Gastrocnemius medialis (tissue), 4 donors: ENCODE measurements at regions of chr19 and their contacts with region 1.

Region 1: GRCh38 chr19:37466798-37467607 is at the start of gene ZNF569:
- DNase-seq: peak; percentile 86 to 89
- ATAC-seq: peak; percentile 91 to 92
- H3K4me3 ChIP-seq: peak within 1 kb of the TSS; percentile 87 to 90 (median 88)
- H3K27ac ChIP-seq: peak within 1 kb of the TSS; percentile 84 to 92 (median 88)
- H3K4me1 ChIP-seq: peaks cover 14 to 16% of the 10 kb centered on the region in 2 donors
- H3K27me3 ChIP-seq: no peaks in the 10 kb centered on the region
- CTCF ChIP-seq: peak in 1 of 5 experiments; percentile 16
- POLR2A ChIP-seq: peak; percentile 20 to 28
- total RNA-seq, gene ZNF569: 3.4 to 9.2 (median 4.4) TPM

Region 2: DNA sequence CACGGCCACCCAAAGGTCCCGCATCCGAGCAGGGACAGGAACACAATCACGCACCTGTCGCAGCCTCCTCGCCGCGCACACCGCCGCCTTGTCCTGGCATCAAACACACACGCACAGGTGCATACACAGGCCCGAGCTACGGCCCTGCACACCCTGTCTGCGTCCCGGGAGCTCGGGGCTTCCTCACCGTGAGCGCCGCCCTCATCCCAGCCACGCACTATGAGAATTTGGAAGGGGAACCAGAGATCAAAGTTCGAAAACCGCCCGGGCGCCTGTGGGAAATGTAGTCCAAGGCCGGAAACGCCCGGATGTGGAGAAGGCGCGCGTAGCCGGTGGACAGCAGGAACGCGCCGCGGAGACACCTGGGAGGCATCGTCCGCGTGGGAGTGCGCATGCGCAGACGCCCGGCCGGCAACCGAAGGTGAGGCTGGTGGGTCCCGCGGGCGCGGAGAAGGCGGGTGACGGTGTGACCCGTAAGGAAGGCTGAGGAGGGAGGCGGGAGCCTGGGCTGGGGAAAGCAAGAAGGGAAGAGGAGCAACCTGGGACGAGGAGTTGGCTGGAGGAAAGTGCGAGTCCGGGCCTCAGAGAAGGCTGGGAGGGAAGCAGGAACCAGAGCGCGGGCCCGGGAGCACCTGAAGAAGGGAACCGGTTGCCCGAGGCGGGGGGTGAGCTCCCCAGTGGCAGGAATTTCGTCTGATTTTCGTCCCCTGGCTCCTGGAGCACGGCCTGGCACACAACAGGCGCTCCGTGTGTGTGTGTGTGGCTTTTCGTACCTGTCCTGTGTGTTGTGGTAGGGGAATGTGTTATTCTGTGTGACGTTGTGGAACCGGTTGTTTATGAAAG is 779.6 kb before region 1 on chr19 and contains the start of gene ZNF567:
- in situ Hi-C with region 1: no loop called
- intact Hi-C with region 1: loop called (anchors 5 kb)
- DNase-seq: peak; percentile 93 to 96
- ATAC-seq: peak; percentile 99
- H3K4me3 ChIP-seq: peak within 1 kb of the TSS; percentile 76 to 96 (median 90)
- H3K27ac ChIP-seq: peak within 1 kb of the TSS; percentile 77 to 87 (median 81)
- H3K4me1 ChIP-seq: peaks cover 13 to 16% of the 10 kb centered on the region in 2 donors
- H3K27me3 ChIP-seq: no peaks in the 10 kb centered on the region
- CTCF ChIP-seq: no peak
- POLR2A ChIP-seq: peak; percentile 68 to 74
- total RNA-seq, gene ZNF567: 1.1 to 3.5 (median 1.9) TPM

Region 3: DNA sequence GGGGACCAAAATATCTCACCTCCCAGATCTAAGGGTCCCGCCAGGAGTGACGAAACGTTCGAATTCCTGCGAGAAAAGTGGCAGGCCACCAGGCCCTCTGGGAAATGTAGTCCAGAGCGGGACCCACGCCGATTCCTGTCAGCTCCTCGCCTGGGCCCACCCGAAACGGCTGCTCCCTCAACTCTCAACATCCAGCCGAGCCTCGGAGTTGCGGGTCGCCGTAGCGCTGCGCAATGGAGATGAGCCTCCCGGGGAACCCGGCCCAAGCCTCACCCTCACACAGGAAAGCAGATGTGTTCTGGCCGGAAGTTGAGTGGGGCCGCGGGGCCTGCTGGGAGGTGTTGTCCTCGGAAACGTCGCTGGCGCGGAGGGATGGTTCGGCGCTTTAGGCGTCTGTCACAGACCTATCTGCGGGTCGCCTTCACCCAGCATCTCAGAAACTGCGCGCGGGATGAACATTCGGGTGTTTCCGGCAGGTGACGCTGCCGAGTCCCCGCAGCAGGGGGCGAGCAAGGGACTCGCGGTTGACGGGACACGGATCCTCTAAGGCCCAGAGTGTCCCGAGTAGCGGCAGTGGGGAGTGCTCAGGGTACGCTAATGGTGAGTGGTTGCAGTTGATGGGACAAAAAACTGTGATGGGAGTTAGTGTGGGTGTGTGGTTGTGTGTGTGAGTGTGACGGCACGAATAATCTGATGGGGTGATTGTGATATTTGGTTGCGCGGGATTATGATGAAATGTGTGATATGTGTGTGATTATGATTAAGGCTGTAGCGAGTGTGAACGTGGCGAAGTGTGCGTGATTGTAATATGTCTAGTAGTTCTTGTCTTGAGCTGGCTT is 550.8 kb before region 1 on chr19 and contains the starts of genes ZNF568 and ZNF829:
- in situ Hi-C with region 1: no loop called
- intact Hi-C with region 1: loop called (anchors 1 kb)
- DNase-seq: peak; percentile 76 to 79
- ATAC-seq: peak; percentile 98
- H3K4me3 ChIP-seq: peak within 1 kb of the TSS; percentile 82 to 98 (median 83)
- H3K27ac ChIP-seq: peak within 1 kb of the TSS; percentile 92 to 97 (median 94)
- H3K4me1 ChIP-seq: peaks cover 8 to 12% of the 10 kb centered on the region in 2 donors
- H3K27me3 ChIP-seq: no peaks in the 10 kb centered on the region
- CTCF ChIP-seq: peak; percentile 32 to 64 (median 46)
- POLR2A ChIP-seq: peak in 1 of 2 donors; percentile 12
- total RNA-seq, gene ZNF568: 3.0 to 10.2 (median 5.4) TPM
- total RNA-seq, gene ZNF829: 0.97 to 1.5 (median 1.2) TPM

Region 4: DNA sequence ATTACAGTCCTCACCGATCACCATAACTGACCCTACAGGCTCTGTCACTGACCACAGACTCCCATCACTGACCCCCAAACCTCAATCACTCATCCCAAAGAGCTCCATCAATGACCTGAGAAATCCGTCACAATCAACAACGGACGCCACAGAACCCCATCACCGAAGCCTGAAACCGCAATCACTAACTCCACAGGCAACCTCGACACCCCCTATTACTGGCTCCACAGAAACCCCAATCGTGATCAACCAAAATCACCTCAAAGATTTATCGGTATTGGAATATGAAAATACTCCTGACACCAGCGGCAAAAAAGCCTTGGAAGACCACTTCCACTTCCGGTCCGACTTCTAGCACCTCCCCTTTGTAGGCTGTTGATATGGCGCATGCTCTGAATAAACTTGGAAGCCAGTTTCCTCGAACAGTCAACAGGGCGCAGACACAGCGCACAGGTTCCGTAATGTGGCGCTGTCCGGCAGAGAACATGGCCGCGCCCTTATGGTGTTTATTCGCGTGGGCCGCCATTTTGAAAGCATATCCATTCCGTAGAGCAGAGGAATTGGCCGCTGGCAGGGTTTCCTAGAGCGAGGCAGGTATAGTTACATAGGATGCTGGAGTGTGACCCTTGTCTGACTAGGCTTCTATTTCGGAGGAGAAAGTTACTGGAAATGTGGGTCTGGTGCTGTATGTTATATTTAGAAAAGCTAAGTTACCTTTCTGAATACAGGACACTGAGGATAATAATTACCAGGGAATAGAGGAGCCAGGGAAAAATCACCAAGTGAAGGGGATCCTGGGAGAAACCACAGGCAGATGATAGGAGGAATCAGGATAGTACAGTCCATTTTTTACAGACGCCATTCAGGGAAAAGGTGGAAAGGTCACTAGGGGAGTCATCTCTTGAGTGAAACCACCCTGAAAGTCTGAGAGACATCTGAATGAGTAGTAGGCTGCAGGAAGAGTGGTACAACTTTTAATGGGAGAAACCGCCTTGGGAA is 294.3 kb before region 1 on chr19 and contains the start of gene ZNF585A:
- in situ Hi-C with region 1: no loop called
- intact Hi-C with region 1: loop called (anchors 1 kb)
- DNase-seq: peak; percentile 90 to 93
- ATAC-seq: peak; percentile 100
- H3K4me3 ChIP-seq: peak within 1 kb of the TSS; percentile 74 to 85 (median 80)
- H3K27ac ChIP-seq: peak within 1 kb of the TSS; percentile 80 to 90 (median 84)
- H3K4me1 ChIP-seq: peaks cover 7 to 12% of the 10 kb centered on the region in 2 donors
- H3K27me3 ChIP-seq: no peaks in the 10 kb centered on the region
- CTCF ChIP-seq: peak in 2 of 5 experiments; percentile 21 to 32
- POLR2A ChIP-seq: peak in 1 of 2 donors; percentile 14
- total RNA-seq, gene ZNF585A: 2.0 to 10.5 (median 6.0) TPM

Region 5: GRCh38 chr19:37334179-37335071 is 132.6 kb before region 1 on chr19:
- in situ Hi-C with region 1: loop called in 1 of 4 experiments (anchors 25 kb)
- intact Hi-C with region 1: loop called (anchors 2 kb)
- DNase-seq: peak; percentile 87 to 91
- ATAC-seq: peak; percentile 99 to 100
- H3K4me3 ChIP-seq: peak overlapping the region; percentile 66 to 93 (median 82)
- H3K27ac ChIP-seq: peak overlapping the region; percentile 83 to 91 (median 88)
- H3K4me1 ChIP-seq: peaks cover 16 to 25% of the 10 kb centered on the region in 2 donors
- H3K27me3 ChIP-seq: no peaks in the 10 kb centered on the region
- CTCF ChIP-seq: no peak
- POLR2A ChIP-seq: peak; percentile 29 to 61

Region 6: DNA sequence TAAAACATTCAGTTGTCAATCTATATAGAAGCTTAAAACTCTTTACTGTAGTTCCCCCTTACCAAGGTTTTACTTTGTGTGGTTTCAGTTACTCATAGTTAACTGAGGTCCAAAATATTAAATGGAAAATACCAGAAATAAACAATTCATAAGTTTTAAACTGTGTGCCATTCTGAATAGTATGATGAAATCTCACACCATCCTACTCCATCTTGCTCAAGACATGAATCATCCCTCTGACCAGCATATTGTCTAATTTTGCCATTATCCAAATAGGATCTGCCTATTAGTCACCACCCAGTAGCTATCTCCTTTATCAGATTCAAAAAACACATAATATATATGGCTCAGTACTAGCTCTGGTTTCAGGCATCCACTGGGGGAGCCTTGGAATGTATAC is 105.2 kb after region 1 on chr19:
- in situ Hi-C with region 1: no loop called
- intact Hi-C with region 1: no loop called
- DNase-seq: no peak
- ATAC-seq: no peak
- H3K4me3 ChIP-seq: no peak overlapping the region
- H3K27ac ChIP-seq: no peak overlapping the region
- H3K4me1 ChIP-seq: no peaks in the 10 kb centered on the region
- H3K27me3 ChIP-seq: no peaks in the 10 kb centered on the region
- CTCF ChIP-seq: no peak
- POLR2A ChIP-seq: no peak

Region 7: DNA sequence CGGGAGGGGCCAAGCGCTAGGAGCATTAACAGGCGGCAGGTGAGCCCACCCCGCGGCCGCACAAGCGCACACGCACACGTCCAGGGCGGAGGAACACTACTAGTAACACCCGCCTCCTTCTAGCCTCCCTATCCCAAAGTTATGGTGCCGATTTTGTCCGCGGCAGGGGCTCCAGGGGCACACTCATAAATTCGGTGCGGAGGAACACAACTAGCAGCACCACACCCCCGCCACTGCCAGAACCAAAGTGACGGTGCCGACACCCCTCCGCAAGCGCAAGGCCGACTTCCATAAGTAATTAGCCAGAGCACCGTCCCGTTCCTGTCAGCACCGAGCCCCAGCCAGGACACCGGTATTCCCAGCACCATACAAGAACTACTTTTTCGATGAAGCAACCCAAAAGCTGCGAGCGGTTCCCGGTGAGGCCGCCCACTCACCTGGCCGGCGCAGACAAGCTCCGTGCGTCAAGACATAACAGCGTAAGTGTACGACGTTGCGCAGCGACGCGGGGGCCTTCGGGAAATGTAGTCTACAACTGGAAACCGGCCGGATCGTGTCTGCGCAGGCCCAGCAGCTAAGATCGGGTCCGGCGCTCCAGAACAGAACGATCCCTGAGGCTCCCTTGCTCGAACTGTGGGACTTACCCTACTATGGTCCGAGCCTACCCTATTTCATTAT is 127.4 kb after region 1 on chr19 and contains the starts of genes ZNF540 and ZNF571:
- in situ Hi-C with region 1: no loop called
- intact Hi-C with region 1: loop called (anchors 1 kb)
- DNase-seq: peak; percentile 85 to 89
- ATAC-seq: peak; percentile 98 to 99
- H3K4me3 ChIP-seq: peak within 1 kb of the TSS; percentile 78 to 95 (median 86)
- H3K27ac ChIP-seq: peak within 1 kb of the TSS; percentile 87 to 95 (median 90)
- H3K4me1 ChIP-seq: peaks cover 17 to 19% of the 10 kb centered on the region in 2 donors
- H3K27me3 ChIP-seq: no peaks in the 10 kb centered on the region
- CTCF ChIP-seq: no peak
- POLR2A ChIP-seq: peak; percentile 61 to 63
- total RNA-seq, gene ZNF540: 0.46 to 1.5 (median 1.3) TPM
- total RNA-seq, gene ZNF571: 1.5 to 2.5 (median 1.8) TPM

Region 8: DNA sequence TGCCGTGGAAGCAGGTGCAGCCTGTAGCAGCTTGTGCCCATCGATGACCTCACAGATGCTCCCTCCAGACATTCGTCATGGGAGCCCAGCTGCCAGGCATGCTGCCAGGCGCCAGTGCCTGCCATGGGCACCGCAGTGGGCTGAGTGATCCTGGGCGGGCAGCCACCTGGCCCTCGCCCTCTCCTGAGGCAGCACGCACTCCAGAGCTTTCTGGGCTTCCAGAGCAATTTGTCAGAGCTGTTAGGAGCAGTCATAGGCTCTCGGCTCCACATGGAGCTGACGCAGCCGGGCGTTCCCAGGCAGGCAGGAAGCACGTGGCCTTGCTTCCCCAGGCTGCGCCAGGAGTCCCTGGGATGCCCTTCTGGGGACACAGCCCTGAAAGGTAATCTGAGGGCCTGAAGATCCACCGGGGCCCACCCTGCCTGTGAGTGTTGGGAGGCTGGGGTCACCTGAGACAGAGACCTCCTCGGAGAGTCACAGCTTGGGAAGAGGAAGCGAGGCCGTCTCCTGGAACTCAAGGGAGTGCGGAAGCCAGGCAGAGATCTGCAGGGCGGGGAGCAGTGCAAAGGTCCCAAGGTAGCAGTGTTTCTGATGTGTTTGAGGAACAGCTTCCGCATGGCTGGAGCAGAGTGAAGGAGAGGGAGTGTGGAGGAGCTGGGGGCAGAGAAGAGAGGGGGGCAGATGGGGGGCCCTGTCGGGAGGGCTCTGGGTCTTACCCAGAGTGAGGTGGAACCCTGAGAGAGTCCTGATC is 706.5 kb after region 1 on chr19:
- in situ Hi-C with region 1: no loop called
- intact Hi-C with region 1: loop called (anchors 5 kb)
- DNase-seq: peak; percentile 88 to 98
- ATAC-seq: peak; percentile 92 to 95
- H3K4me3 ChIP-seq: peak overlapping the region; percentile 20 to 46 (median 39)
- H3K27ac ChIP-seq: peak overlapping the region; percentile 90 to 96 (median 93)
- H3K4me1 ChIP-seq: peaks cover 18 to 19% of the 10 kb centered on the region in 2 donors
- H3K27me3 ChIP-seq: no peaks in the 10 kb centered on the region
- CTCF ChIP-seq: no peak
- POLR2A ChIP-seq: peak; percentile 48 to 65